Left ventricle myocardium inferior (tissue), 1 donor: ENCODE measurements at regions of chr2 and their contacts with region 1.

Region 1: GRCh38 chr2:47339745-47340541 is 63.0 kb upstream of the MSH2 start:
- DNase-seq: no peak
- H3K4me3 ChIP-seq: no peak overlapping the region
- H3K27ac ChIP-seq: no peak overlapping the region
- H3K4me1 ChIP-seq: peaks cover 22% of the 10 kb centered on the region
- H3K27me3 ChIP-seq: no peaks in the 10 kb centered on the region
- CTCF ChIP-seq: no peak

Region 2: DNA sequence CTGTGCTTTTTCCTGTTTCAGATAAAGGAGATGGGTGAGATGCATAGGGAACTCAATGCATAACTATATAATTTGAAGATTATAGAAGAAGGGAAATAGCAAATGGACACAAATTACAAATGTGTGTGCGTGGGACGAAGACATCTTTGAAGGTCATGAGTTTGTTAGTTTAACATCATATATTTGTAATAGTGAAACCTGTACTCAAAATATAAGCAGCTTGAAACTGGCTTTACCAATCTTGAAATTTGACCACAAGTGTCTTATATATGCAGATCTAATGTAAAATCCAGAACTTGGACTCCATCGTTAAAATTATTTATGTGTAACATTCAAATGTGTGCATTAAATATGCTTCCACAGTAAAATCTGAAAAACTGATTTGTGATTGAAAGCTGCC is 46.6 kb after region 1 on chr2:
- intact Hi-C with region 1: loop called (anchors 5 kb)
- DNase-seq: no peak
- H3K4me3 ChIP-seq: no peak overlapping the region
- H3K27ac ChIP-seq: no peak overlapping the region
- H3K4me1 ChIP-seq: no peaks in the 10 kb centered on the region
- H3K27me3 ChIP-seq: no peaks in the 10 kb centered on the region
- CTCF ChIP-seq: no peak